Pancreas (tissue), 10 donors: ENCODE measurements at regions of chr10 and their contacts with region 1.

Region 1: GRCh38 chr10:87659571-87660483 is at the start of gene PAPSS2:
- DNase-seq: peak; percentile 58 to 86 (median 65)
- ATAC-seq: peak; percentile 71 to 81 (median 72)
- H3K4me3 ChIP-seq: peak within 1 kb of the TSS; percentile 33 to 90 (median 78)
- H3K27ac ChIP-seq: peak within 1 kb of the TSS; percentile 58 to 89 (median 76)
- H3K4me1 ChIP-seq: peaks cover 0 to 11% (median 7%) of the 10 kb centered on the region in 3 donors
- H3K27me3 ChIP-seq: no peaks in the 10 kb centered on the region
- CTCF ChIP-seq: no peak
- total RNA-seq, gene PAPSS2: 29.4 to 54.7 (median 39.9) TPM

Region 2: GRCh38 chr10:87531908-87532622 is 127.8 kb before region 1 on chr10:
- intact Hi-C with region 1: loop called in 1 of 3 experiments (anchors 10 kb)
- DNase-seq: no peak
- ATAC-seq: peak in 3 of 4 donors; percentile 13 to 55 (median 41)
- H3K4me3 ChIP-seq: no peak overlapping the region
- H3K27ac ChIP-seq: peak overlapping the region in 1 of 4 donors; percentile 35
- H3K4me1 ChIP-seq: peaks cover 0 to 7% (median 0%) of the 10 kb centered on the region in 3 donors
- H3K27me3 ChIP-seq: no peaks in the 10 kb centered on the region
- CTCF ChIP-seq: no peak

Region 3: GRCh38 chr10:87715552-87716347 is 55.9 kb after region 1 on chr10:
- intact Hi-C with region 1: loop called in 1 of 3 experiments (anchors 10 kb)
- DNase-seq: no peak
- ATAC-seq: no peak
- H3K4me3 ChIP-seq: no peak overlapping the region
- H3K27ac ChIP-seq: no peak overlapping the region
- H3K4me1 ChIP-seq: peaks cover 19 to 31% (median 21%) of the 10 kb centered on the region in 3 donors
- H3K27me3 ChIP-seq: no peaks in the 10 kb centered on the region
- CTCF ChIP-seq: no peak

Region 4: GRCh38 chr10:87734987-87735827 is 75.4 kb after region 1 on chr10:
- intact Hi-C with region 1: loop called in 1 of 3 experiments (anchors 5 kb)
- DNase-seq: peak in 1 of 6 donors; percentile 32
- ATAC-seq: peak; percentile 58 to 93 (median 85)
- H3K4me3 ChIP-seq: no peak overlapping the region
- H3K27ac ChIP-seq: no peak overlapping the region
- H3K4me1 ChIP-seq: peaks cover 0 to 6% (median 5%) of the 10 kb centered on the region in 3 donors
- H3K27me3 ChIP-seq: no peaks in the 10 kb centered on the region
- CTCF ChIP-seq: peak; percentile 35 to 74 (median 64)